Activated naive CD4-positive, alpha-beta T cell treated with anti-CD3 and anti-CD28 coated beads for 36 hours (primary cell): ENCODE measurements at regions of chr12 and their contacts with region 1.

Region 1: DNA sequence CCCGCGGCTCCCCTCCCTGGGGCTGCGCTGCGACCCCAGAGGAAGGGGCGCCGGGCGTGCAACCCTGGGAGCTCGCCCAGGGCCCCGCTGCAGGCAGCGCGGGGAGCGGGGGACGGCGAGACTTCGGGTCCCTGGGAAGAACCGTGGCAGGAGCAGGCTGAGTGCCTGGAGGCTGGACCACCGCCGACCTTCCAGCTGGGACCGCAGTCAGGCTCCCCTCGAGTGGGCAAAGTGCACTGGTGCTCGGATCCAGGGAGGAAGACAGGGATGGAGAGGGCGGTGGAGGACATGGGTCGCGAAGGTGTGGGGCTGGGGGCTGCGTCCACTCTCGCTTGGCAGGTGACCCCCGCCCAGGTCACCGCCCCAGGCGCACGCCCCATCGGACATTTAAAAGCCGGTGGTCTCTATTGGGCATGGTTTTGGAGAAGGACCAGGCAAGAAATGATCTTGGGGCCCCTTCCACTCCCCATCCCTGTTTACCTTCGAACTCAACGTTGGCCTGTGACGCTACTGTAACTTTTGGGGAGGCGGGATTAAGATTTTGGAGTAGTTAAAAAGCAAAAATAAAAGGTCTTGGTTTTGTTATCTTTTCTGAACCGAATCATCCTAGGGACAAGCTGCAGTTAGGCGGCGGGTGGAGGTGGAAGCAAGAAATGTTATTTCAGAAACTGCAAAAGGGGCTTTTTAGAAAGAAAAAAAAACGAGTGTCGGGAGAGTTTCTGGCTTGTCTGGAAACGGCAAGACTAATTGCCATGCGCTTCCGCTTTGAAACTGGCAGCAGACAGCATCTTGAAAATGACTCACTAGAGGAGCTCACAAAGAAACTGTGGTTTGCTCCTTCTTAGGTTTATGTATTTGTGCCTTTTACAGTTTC is 1.0 kb downstream of the ELK3 start:
- DNase-seq: peak; percentile 91
- H3K4me3 Mint-ChIP-seq: peak overlapping the region; percentile 99
- H3K27ac Mint-ChIP-seq: peak overlapping the region; percentile 100
- H3K4me1 Mint-ChIP-seq: peaks cover 54% of the 10 kb centered on the region
- H3K27me3 Mint-ChIP-seq: no peaks in the 10 kb centered on the region

Region 2: GRCh38 chr12:95102916-95103671 is 1092.1 kb before region 1 on chr12:
- CTCF ChIA-PET with region 1: no interaction called
- intact Hi-C with region 1: loop called (anchors 2 kb)
- DNase-seq: peak; percentile 70
- H3K4me3 Mint-ChIP-seq: no peak overlapping the region
- H3K27ac Mint-ChIP-seq: no peak overlapping the region
- H3K4me1 Mint-ChIP-seq: peaks cover 10% of the 10 kb centered on the region
- H3K27me3 Mint-ChIP-seq: no peaks in the 10 kb centered on the region

Region 3: GRCh38 chr12:96035278-96036236 is 159.7 kb before region 1 on chr12 and contains the start of gene LTA4H:
- CTCF ChIA-PET with region 1: no interaction called
- intact Hi-C with region 1: loop called (anchors 1 kb)
- DNase-seq: peak; percentile 98
- H3K4me3 Mint-ChIP-seq: no peak within 1 kb of the TSS
- H3K27ac Mint-ChIP-seq: no peak within 1 kb of the TSS
- H3K4me1 Mint-ChIP-seq: peaks cover 19% of the 10 kb centered on the region
- H3K27me3 Mint-ChIP-seq: no peaks in the 10 kb centered on the region
- total RNA-seq, gene LTA4H: 125 TPM

Region 4: GRCh38 chr12:96177013-96177412 is 18.2 kb before region 1 on chr12:
- CTCF ChIA-PET with region 1: interaction called, 7 read pairs
- intact Hi-C with region 1: loop called (anchors 1 kb)
- DNase-seq: peak; percentile 91
- H3K4me3 Mint-ChIP-seq: no peak overlapping the region
- H3K27ac Mint-ChIP-seq: peak overlapping the region; percentile 82
- H3K4me1 Mint-ChIP-seq: peaks cover 17% of the 10 kb centered on the region
- H3K27me3 Mint-ChIP-seq: no peaks in the 10 kb centered on the region

Region 5: DNA sequence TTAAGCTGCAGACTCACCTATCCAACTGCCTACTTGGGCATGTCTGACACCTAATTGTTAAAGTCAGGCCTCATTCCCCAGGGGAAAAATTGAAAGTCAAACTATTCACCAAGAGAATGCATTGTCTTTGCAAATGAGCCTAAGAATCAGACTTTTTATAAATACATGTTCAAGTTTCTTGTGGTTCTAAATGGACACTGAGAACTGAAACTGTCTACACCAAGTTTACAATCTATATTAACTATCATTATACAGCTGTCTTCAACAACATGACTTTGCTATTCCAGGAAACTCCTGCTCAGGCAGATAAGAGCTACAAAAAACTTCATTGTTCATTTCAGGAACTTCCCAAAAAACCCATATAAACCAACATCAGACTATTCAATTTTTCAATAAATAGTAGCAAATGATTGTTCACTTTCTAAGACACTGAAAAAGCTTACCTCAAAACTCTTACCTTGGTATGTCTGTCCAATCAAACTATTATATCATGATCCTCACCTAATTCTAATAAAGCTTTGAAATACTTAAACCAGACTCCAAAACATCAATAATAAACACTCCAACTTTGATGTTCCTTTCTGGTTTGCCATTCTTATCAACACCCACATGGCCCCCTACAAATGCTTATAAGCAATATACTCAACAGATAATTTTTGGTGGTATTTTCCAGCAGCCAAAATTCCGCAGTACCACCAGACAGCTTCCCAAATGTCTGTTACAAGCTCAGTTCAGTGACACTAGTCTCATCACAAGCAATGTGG is 180.8 kb after region 1 on chr12:
- CTCF ChIA-PET with region 1: no interaction called
- intact Hi-C with region 1: loop called (anchors 1 kb)
- DNase-seq: no peak
- H3K4me3 Mint-ChIP-seq: no peak overlapping the region
- H3K27ac Mint-ChIP-seq: peak overlapping the region; percentile 96
- H3K4me1 Mint-ChIP-seq: peaks cover 82% of the 10 kb centered on the region
- H3K27me3 Mint-ChIP-seq: no peaks in the 10 kb centered on the region

Region 6: GRCh38 chr12:96416033-96416801 is 221.0 kb after region 1 on chr12:
- CTCF ChIA-PET with region 1: no interaction called
- intact Hi-C with region 1: no loop called
- DNase-seq: no peak
- H3K4me3 Mint-ChIP-seq: no peak overlapping the region
- H3K27ac Mint-ChIP-seq: no peak overlapping the region
- H3K4me1 Mint-ChIP-seq: peaks cover 23% of the 10 kb centered on the region
- H3K27me3 Mint-ChIP-seq: no peaks in the 10 kb centered on the region

Region 7: DNA sequence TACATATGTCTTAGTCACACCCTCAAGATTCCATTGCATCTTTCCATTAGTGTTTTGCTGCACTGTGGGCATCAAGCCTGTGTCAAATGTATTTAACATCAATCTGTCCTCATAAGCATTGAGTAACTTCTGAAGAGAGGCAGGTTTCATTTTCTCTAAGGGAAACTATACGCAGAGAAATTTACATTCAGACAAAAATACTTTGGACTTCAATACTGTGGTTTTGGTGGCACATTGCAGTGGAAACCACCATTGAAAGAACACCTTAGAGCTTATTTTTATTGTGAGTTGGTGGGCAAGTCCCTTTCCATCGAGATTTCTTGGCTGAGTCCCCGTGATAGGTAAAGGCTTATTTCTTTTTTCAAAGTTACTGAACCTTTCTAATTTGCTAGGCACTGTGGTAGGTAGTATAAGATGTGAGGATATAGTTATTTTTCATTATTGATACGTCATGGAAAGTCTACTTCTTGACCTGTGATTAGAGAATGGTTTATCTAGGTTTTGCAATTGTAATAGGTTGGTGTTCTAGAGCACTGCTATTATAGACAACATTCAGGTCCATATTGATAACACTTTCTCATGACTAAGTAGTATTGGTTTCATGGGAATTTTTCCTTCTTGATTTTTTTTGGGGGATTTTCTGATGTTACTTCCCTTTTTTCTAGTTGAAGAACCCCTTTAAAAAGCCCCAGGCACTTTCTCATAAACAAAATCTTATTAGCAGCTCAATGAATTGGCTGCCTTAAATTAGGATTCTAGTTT is 376.1 kb after region 1 on chr12:
- CTCF ChIA-PET with region 1: no interaction called
- intact Hi-C with region 1: loop called (anchors 1 kb)
- DNase-seq: peak; percentile 58
- H3K4me3 Mint-ChIP-seq: peak overlapping the region; percentile 27
- H3K27ac Mint-ChIP-seq: peak overlapping the region; percentile 15
- H3K4me1 Mint-ChIP-seq: peaks cover 27% of the 10 kb centered on the region
- H3K27me3 Mint-ChIP-seq: peaks cover 7% of the 10 kb centered on the region

Region 8: GRCh38 chr12:97182769-97183168 is 987.6 kb after region 1 on chr12:
- CTCF ChIA-PET with region 1: no interaction called
- intact Hi-C with region 1: no loop called
- DNase-seq: no peak
- H3K4me3 Mint-ChIP-seq: no peak overlapping the region
- H3K27ac Mint-ChIP-seq: no peak overlapping the region
- H3K4me1 Mint-ChIP-seq: no peaks in the 10 kb centered on the region
- H3K27me3 Mint-ChIP-seq: peaks cover 7% of the 10 kb centered on the region